Caco-2 (cell line): ENCODE measurements at regions of chr1 and their contacts with region 1.

Region 1: DNA sequence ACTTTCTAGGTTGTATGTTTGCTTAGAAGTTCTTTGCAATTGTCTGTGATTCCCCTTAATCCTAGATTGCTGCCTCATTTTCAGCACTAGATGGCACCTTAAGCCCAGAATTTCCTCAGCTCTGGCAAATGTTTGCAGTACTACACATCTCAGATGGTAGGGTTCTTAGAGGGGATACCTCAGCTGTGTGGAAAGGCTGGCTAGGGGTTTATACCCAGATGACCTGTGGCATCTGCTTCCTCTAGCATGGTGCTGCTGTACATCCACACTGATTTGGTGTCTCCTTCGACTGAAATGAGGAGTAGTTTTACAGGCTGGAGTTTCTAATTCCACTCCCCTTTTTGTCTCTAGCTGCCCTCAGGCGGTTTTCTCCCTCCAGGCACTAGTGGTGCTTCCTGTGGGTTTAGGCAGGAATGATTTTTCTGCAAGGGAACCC is 23.5 kb downstream of the ASB17 start:
- DNase-seq: peak; percentile 42 to 53
- H3K4me3 ChIP-seq: no peak overlapping the region
- H3K4me3 Mint-ChIP-seq: no peak overlapping the region
- H3K27ac Mint-ChIP-seq: no peak overlapping the region
- H3K4me1 ChIP-seq: no peaks in the 10 kb centered on the region
- H3K4me1 Mint-ChIP-seq: peaks cover 16% of the 10 kb centered on the region
- H3K27me3 ChIP-seq: no peaks in the 10 kb centered on the region
- H3K27me3 Mint-ChIP-seq: no peaks in the 10 kb centered on the region
- CTCF ChIP-seq: peak; percentile 37 to 46

Region 2: DNA sequence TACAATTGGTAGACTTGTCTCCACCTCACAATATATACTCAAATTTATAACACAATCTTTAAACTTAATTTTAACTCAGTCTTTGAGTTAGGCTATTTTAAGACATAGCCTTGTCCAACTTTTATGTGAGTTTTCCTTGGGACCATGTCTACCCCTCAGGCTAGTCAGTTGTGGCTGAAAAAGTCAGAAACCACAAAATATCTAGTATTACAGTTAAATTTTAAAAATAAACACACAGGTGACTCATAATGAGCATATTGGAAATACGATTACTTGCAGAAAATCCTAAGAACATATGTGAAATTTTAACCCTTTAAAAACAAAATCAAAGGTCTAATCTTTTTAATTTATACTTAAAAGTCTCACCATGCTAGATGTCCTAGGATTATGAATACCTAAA is 28.3 kb after region 1 on chr1:
- CTCF ChIA-PET with region 1: no interaction called
- POLR2A ChIA-PET with region 1: no interaction called
- intact Hi-C with region 1: no loop called
- DNase-seq: no peak
- H3K4me3 ChIP-seq: no peak overlapping the region
- H3K4me3 Mint-ChIP-seq: no peak overlapping the region
- H3K27ac Mint-ChIP-seq: no peak overlapping the region
- H3K4me1 ChIP-seq: 0 out of 2 replicates have a peak, but pooled peaks cover 7% of the 10 kb centered on the region
- H3K4me1 Mint-ChIP-seq: peaks cover 6% of the 10 kb centered on the region
- H3K27me3 ChIP-seq: no peaks in the 10 kb centered on the region
- H3K27me3 Mint-ChIP-seq: no peaks in the 10 kb centered on the region
- CTCF ChIP-seq: no peak

Region 3: GRCh38 chr1:75999034-75999433 is 90.3 kb after region 1 on chr1:
- CTCF ChIA-PET with region 1: no interaction called
- POLR2A ChIA-PET with region 1: no interaction called
- intact Hi-C with region 1: no loop called
- DNase-seq: no peak
- H3K4me3 ChIP-seq: no peak overlapping the region
- H3K4me3 Mint-ChIP-seq: no peak overlapping the region
- H3K27ac Mint-ChIP-seq: no peak overlapping the region
- H3K4me1 ChIP-seq: no peaks in the 10 kb centered on the region
- H3K4me1 Mint-ChIP-seq: no peaks in the 10 kb centered on the region
- H3K27me3 ChIP-seq: no peaks in the 10 kb centered on the region
- H3K27me3 Mint-ChIP-seq: no peaks in the 10 kb centered on the region
- CTCF ChIP-seq: no peak

Region 4: DNA sequence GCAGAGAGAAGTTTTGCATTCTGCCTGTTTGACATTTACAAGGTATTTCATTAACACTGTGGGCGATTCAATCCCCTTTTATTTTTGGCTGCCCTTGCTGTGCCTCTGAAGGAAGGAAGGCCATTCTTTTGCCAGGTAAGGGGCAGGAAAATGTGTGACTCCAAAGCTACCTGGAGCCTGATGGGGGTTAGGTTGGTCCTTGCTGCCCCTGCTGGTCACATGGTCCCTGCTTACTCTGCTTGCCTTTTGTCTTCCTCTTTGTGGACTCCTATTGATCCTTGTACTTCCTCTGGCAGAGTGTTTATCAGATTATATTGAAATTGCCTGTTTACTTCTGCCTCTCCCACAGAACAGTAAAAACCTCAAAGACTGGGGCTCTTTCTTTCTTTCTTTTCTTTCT is 231.5 kb after region 1 on chr1:
- CTCF ChIA-PET with region 1: no interaction called
- POLR2A ChIA-PET with region 1: no interaction called
- intact Hi-C with region 1: loop called (anchors 2 kb)
- DNase-seq: peak in 1 of 2 experiments; percentile 3
- H3K4me3 ChIP-seq: no peak overlapping the region
- H3K4me3 Mint-ChIP-seq: no peak overlapping the region
- H3K27ac Mint-ChIP-seq: no peak overlapping the region
- H3K4me1 ChIP-seq: no peaks in the 10 kb centered on the region
- H3K4me1 Mint-ChIP-seq: peaks cover 9% of the 10 kb centered on the region
- H3K27me3 ChIP-seq: no peaks in the 10 kb centered on the region
- H3K27me3 Mint-ChIP-seq: no peaks in the 10 kb centered on the region
- CTCF ChIP-seq: peak in 1 of 2 experiments; percentile 16

Region 5: DNA sequence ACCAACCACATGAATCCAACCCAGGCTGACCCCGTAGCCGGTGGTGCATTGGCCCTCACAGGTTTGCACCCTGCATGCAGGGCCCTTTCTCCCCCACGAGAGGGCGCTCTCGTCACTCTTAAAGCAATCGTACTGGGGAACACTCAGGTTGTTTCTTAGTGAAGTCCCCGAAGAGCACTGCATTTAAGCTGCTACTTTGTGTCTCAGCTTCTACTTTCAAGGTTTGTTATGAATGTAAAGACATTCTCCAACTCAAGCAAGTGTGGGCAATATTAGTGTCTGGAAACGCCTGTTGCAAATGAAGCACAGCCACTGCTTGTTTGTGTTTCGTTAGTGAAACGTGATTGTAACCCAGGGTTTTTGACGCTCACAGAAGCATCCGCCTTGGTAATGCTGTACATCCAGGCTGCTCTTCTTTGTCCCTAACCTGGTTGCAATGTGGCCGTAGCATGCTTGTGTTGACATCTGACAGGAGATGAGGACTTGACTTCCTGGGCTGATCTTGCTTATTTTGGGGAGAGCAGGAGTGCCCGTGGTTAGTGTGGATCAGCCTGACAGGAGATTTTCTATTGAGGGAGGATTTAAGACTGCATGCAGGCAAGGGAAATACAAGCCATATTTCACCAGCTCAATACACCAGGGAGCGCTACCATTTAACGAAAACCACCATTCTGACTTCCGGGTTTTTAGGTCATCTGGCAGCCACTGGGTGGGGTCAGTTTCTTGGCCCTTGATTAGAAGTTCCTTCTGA is 245.6 kb after region 1 on chr1:
- CTCF ChIA-PET with region 1: interaction called, 3 read pairs
- POLR2A ChIA-PET with region 1: no interaction called
- intact Hi-C with region 1: loop called (anchors 2 kb)
- DNase-seq: peak; percentile 41 to 60
- H3K4me3 ChIP-seq: no peak overlapping the region
- H3K4me3 Mint-ChIP-seq: no peak overlapping the region
- H3K27ac Mint-ChIP-seq: no peak overlapping the region
- H3K4me1 ChIP-seq: no peaks in the 10 kb centered on the region
- H3K4me1 Mint-ChIP-seq: no peaks in the 10 kb centered on the region
- H3K27me3 ChIP-seq: no peaks in the 10 kb centered on the region
- H3K27me3 Mint-ChIP-seq: no peaks in the 10 kb centered on the region
- CTCF ChIP-seq: peak; percentile 73 to 81